ENCODE measurements at regions of chr1 and their contacts with region 1.

Region 1: GRCh38 chr1:39892601-39893595 is 8.8 kb downstream of the MYCL start:
- DNase-seq: no peak
- ATAC-seq: peak; percentile 74
- H3K4me3 ChIP-seq: no peak overlapping the region
- H3K27ac ChIP-seq: no peak overlapping the region
- H3K4me1 ChIP-seq: peaks cover 11% of the 10 kb centered on the region
- H3K27me3 ChIP-seq: peaks cover 1 to 3% of the 10 kb centered on the region in 2 experiments; a peak in 2 of 4 replicates
- CTCF ChIP-seq: no peak
- EP300 ChIP-seq: no peak
- POLR2A ChIP-seq: no peak
- RAD21 ChIP-seq: no peak

Region 2: DNA sequence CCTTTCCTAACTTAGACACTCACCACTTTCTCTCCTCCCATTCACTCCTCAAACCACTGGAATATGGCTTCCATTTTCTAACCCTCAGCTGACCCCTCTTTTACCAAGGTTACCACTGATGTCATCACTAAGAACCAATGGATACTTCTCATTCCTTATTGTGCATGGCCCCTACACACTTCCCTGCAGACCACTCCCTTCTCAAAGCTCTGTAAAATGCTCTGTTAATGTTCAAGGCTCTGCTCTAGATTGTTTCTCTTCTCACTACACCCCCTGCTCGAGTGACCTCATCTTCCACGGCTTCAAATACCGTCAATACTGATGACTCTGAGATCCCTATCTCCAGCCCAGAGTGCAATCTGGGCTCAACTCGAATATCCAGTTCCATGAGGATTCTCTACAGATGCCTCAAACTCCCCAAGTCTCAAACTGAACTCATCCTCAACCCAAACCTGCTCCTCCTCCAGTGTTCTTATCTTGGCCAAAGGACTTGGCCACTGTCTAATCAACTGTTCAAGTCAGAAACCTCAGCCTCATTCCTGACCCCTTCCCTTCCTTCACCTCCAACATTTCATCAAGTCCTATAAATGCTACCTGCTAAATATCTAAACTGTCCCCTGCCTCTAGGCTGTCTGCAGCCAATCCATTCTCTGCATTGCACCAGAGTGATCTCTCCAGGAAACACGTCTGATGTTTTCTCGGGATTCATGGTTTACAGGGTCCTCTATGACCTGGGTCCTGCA is 62.9 kb before region 1 on chr1:
- CTCF ChIA-PET with region 1: no interaction called
- POLR2A ChIA-PET with region 1: no interaction called
- RAD21 ChIA-PET with region 1: no interaction called
- SMC1A ChIA-PET with region 1: no interaction called
- in situ Hi-C with region 1: no loop called
- intact Hi-C with region 1: no loop called
- DNase-seq: no peak
- ATAC-seq: no peak
- H3K4me3 ChIP-seq: no peak overlapping the region
- H3K27ac ChIP-seq: no peak overlapping the region
- H3K4me1 ChIP-seq: peaks cover 11% of the 10 kb centered on the region
- H3K27me3 ChIP-seq: no peaks in the 10 kb centered on the region
- CTCF ChIP-seq: no peak
- EP300 ChIP-seq: no peak
- POLR2A ChIP-seq: no peak
- RAD21 ChIP-seq: no peak

Region 3: GRCh38 chr1:39852214-39852791 is 40.6 kb before region 1 on chr1:
- CTCF ChIA-PET with region 1: no interaction called
- POLR2A ChIA-PET with region 1: no interaction called
- RAD21 ChIA-PET with region 1: no interaction called
- SMC1A ChIA-PET with region 1: no interaction called
- in situ Hi-C with region 1: no loop called
- intact Hi-C with region 1: no loop called
- DNase-seq: no peak
- ATAC-seq: no peak
- H3K4me3 ChIP-seq: no peak overlapping the region
- H3K27ac ChIP-seq: no peak overlapping the region
- H3K4me1 ChIP-seq: no peaks in the 10 kb centered on the region
- H3K27me3 ChIP-seq: no peaks in the 10 kb centered on the region
- CTCF ChIP-seq: no peak
- EP300 ChIP-seq: no peak
- POLR2A ChIP-seq: no peak
- RAD21 ChIP-seq: no peak

Region 4: GRCh38 chr1:39882152-39882551 is 10.7 kb before region 1 on chr1:
- CTCF ChIA-PET with region 1: interaction called, 5 read pairs
- POLR2A ChIA-PET with region 1: interaction called, 24 read pairs
- RAD21 ChIA-PET with region 1: interaction called, 8 read pairs
- SMC1A ChIA-PET with region 1: interaction called, 5 read pairs
- in situ Hi-C with region 1: no loop called
- intact Hi-C with region 1: no loop called
- DNase-seq: no peak
- ATAC-seq: no peak
- H3K4me3 ChIP-seq: peak overlapping the region; percentile 75
- H3K27ac ChIP-seq: peak overlapping the region; percentile 48
- H3K4me1 ChIP-seq: peaks cover 4% of the 10 kb centered on the region
- H3K27me3 ChIP-seq: no peaks in the 10 kb centered on the region
- CTCF ChIP-seq: no peak
- EP300 ChIP-seq: no peak
- POLR2A ChIP-seq: no peak
- RAD21 ChIP-seq: no peak

Measured in GM12878 (cell line).